GM12878 (cell line): ENCODE measurements at regions of chr1 and their contacts with region 1.

Region 1: GRCh38 chr1:209513226-209513625 is 70.3 kb upstream of the CAMK1G start:
- DNase-seq: no peak
- ATAC-seq: peak; percentile 85
- H3K4me3 ChIP-seq: no peak overlapping the region
- H3K27ac ChIP-seq: no peak overlapping the region
- H3K4me1 ChIP-seq: no peaks in the 10 kb centered on the region
- H3K27me3 ChIP-seq: no peaks in the 10 kb centered on the region
- CTCF ChIP-seq: peak; percentile 59 to 68 (median 62); a peak in 5 of 6 replicates
- EP300 ChIP-seq: no peak
- POLR2A ChIP-seq: no peak
- RAD21 ChIP-seq: peak; percentile 50

Region 2: GRCh38 chr1:209526140-209526539 is 12.9 kb after region 1 on chr1:
- CTCF ChIA-PET with region 1: interaction called, 18 read pairs
- POLR2A ChIA-PET with region 1: no interaction called
- RAD21 ChIA-PET with region 1: no interaction called
- SMC1A ChIA-PET with region 1: no interaction called
- in situ Hi-C with region 1: no loop called
- intact Hi-C with region 1: no loop called
- DNase-seq: no peak
- ATAC-seq: no peak
- H3K4me3 ChIP-seq: no peak overlapping the region
- H3K27ac ChIP-seq: no peak overlapping the region
- H3K4me1 ChIP-seq: no peaks in the 10 kb centered on the region
- H3K27me3 ChIP-seq: peaks cover 0 to 3% of the 10 kb centered on the region in 2 experiments; a peak in 2 of 4 replicates
- CTCF ChIP-seq: no peak
- EP300 ChIP-seq: no peak
- POLR2A ChIP-seq: no peak
- RAD21 ChIP-seq: no peak

Region 3: DNA sequence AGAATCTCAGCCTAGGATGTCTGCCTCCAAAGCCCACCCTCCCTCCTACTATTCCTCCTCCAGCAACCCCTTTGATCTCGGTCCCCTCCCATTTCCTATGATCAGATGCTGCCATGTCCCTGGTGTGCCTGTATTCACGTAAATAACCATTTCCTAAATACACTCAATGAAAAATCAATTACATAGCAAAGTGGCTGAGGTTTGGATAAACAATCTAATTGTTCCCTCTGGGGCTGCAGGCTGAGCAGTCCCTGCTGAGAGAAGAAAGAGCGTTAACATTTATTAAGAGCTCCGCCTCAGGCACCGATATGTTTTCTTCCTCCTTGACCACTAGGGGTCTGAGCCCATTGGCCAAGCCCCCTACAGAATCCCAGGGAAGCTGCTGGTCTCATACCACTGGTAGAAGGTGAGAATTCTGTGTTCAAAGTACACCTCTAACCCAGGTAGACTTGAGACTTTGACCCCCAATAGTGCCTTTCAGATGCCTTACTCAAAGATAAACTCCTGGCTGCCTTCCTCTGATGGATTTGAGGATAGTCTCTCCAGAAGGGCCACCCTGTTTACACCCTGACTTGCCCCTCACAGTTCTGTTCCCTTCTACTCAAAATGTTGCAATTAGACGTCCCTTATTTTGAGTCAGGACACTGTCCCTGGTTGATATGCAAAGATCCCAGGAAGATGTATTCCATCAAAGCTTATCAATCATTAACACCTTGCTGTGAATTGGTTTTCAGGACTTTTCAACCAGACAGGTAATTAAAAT is 36.4 kb after region 1 on chr1:
- CTCF ChIA-PET with region 1: no interaction called
- POLR2A ChIA-PET with region 1: no interaction called
- RAD21 ChIA-PET with region 1: no interaction called
- SMC1A ChIA-PET with region 1: no interaction called
- in situ Hi-C with region 1: no loop called
- intact Hi-C with region 1: no loop called
- DNase-seq: no peak
- ATAC-seq: 0 out of 3 replicates have a peak, but pooled peaks have one; percentile 28
- H3K4me3 ChIP-seq: no peak overlapping the region
- H3K27ac ChIP-seq: no peak overlapping the region
- H3K4me1 ChIP-seq: no peaks in the 10 kb centered on the region
- H3K27me3 ChIP-seq: peaks cover 0 to 3% of the 10 kb centered on the region in 2 experiments; a peak in 2 of 4 replicates
- CTCF ChIP-seq: 0 out of 6 replicates have a peak, but pooled peaks of 1 of the 3 experiments have one; percentile 11
- EP300 ChIP-seq: no peak
- POLR2A ChIP-seq: no peak
- RAD21 ChIP-seq: no peak